ENCODE measurements at regions of chr7 and their contacts with region 1.

Region 1: GRCh38 chr7:45052011-45052410 is 36.8 kb downstream of the NACAD start:
- DNase-seq: no peak
- ATAC-seq: no peak
- H3K4me3 ChIP-seq: no peak overlapping the region
- H3K27ac ChIP-seq: no peak overlapping the region
- H3K4me1 ChIP-seq: no peaks in the 10 kb centered on the region
- H3K27me3 ChIP-seq: no peaks in the 10 kb centered on the region
- CTCF ChIP-seq: no peak

Region 2: GRCh38 chr7:44654255-44654796 is 397.7 kb before region 1 on chr7:
- CTCF ChIA-PET with region 1: no interaction called
- POLR2A ChIA-PET with region 1: no interaction called
- in situ Hi-C with region 1: no loop called
- intact Hi-C with region 1: no loop called
- DNase-seq: no peak
- ATAC-seq: no peak
- H3K4me3 ChIP-seq: no peak overlapping the region
- H3K27ac ChIP-seq: no peak overlapping the region
- H3K4me1 ChIP-seq: no peaks in the 10 kb centered on the region
- H3K27me3 ChIP-seq: no peaks in the 10 kb centered on the region
- CTCF ChIP-seq: no peak

Region 3: GRCh38 chr7:44784364-44784763 is 267.6 kb before region 1 on chr7:
- CTCF ChIA-PET with region 1: no interaction called
- POLR2A ChIA-PET with region 1: no interaction called
- in situ Hi-C with region 1: no loop called
- intact Hi-C with region 1: no loop called
- DNase-seq: no peak
- ATAC-seq: peak; percentile 30
- H3K4me3 ChIP-seq: no peak overlapping the region
- H3K27ac ChIP-seq: no peak overlapping the region
- H3K4me1 ChIP-seq: no peaks in the 10 kb centered on the region
- H3K27me3 ChIP-seq: no peaks in the 10 kb centered on the region
- CTCF ChIP-seq: no peak

Region 4: DNA sequence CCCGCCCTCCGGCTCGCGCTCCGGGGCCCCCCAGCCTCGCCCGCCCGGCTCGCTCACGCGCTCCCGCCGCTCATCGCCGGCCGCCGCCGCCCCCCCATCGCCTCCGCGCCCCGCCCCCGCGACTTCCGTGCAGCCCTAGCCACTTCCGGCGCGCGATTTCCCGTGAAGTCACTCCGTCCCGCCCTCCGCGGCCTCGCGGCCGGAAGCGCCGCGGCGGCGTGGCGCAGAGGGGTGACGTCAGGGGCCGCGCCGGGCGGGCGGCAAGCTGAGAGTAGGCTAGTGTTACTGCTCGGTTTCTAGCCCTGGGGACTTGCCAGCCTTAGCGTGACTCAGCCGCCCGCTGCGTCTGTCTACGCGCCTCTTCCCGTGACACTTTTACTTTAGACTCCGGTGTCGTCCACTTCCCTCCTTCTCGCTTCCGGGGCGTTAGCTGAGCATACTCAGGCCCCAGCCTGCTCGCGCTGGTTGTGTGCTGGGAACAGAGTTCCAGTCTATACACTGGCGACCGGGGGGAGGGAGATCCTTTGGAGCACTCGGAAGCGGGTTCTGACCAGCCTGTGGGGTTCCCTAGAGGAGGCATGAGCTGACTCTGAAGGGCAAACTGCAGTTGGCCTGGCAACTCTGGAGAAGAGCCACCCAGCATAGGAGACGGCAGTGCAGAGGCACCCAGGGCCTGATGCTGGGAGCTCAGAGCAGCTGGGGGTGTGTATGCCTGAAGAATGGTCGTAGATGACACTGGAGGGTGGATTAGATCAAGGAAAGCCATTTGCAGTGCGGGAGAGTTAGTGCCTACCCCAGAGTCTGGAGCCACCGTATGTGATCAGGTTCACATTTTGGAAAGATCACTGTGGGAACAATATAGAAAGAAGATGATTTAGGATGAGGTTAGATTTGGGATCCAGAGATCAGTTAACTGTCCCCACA is 166.4 kb before region 1 on chr7 and contains the start of gene PURB:
- CTCF ChIA-PET with region 1: no interaction called
- POLR2A ChIA-PET with region 1: no interaction called
- in situ Hi-C with region 1: no loop called
- intact Hi-C with region 1: no loop called
- DNase-seq: peak; percentile 95
- ATAC-seq: peak; percentile 97
- H3K4me3 ChIP-seq: peak within 1 kb of the TSS; percentile 81 to 83
- H3K27ac ChIP-seq: peak within 1 kb of the TSS; percentile 98
- H3K4me1 ChIP-seq: peaks cover 37% of the 10 kb centered on the region
- H3K27me3 ChIP-seq: no peaks in the 10 kb centered on the region
- CTCF ChIP-seq: no peak
- total RNA-seq, gene PURB: 25.2 TPM

Region 5: DNA sequence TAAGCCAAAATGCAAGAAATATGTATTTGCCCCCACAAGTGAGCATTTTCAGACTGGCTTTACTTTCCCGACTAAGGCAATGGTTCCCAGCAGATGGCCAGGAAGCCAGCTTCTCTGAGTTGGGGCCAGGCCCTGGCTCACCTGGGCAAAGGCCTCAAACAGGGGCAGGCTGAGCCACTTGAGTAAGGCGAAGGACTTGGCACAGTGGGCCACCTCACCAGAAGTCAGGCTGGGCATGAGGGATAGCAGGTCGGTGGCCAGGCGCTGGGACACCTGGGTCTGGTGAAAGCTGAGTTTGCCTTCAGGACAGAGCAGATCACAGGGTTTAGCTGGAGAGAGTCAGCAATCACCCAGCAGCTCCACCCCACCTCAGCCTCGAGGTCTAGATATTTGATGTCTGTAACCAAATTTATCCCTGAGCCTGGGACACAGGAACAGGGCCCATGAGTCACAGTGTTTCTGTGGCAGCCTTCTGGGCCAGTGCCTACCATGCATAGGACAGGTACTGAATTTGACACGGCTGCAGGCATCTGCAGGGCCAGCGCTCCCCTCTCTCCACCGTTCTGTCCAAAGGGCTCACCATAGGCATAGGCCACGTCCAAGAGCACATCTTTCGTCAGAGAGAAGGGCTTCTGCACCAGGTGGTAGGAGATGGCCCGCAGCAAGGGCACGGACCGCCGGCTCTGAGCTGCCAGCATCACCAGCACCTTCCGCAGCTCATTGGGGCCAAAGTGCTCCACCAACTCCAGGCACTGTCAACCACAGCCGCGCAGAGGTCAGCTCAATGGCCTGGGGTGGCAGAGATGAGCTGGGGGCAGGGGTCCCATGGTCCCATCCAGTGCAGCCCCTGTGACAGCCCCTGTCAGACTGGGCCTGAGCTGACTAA is 52.2 kb after region 1 on chr7:
- CTCF ChIA-PET with region 1: no interaction called
- POLR2A ChIA-PET with region 1: no interaction called
- in situ Hi-C with region 1: no loop called
- intact Hi-C with region 1: no loop called
- DNase-seq: no peak
- ATAC-seq: no peak
- H3K4me3 ChIP-seq: no peak overlapping the region
- H3K27ac ChIP-seq: no peak overlapping the region
- H3K4me1 ChIP-seq: peaks cover 19% of the 10 kb centered on the region
- H3K27me3 ChIP-seq: no peaks in the 10 kb centered on the region
- CTCF ChIP-seq: no peak

Region 6: DNA sequence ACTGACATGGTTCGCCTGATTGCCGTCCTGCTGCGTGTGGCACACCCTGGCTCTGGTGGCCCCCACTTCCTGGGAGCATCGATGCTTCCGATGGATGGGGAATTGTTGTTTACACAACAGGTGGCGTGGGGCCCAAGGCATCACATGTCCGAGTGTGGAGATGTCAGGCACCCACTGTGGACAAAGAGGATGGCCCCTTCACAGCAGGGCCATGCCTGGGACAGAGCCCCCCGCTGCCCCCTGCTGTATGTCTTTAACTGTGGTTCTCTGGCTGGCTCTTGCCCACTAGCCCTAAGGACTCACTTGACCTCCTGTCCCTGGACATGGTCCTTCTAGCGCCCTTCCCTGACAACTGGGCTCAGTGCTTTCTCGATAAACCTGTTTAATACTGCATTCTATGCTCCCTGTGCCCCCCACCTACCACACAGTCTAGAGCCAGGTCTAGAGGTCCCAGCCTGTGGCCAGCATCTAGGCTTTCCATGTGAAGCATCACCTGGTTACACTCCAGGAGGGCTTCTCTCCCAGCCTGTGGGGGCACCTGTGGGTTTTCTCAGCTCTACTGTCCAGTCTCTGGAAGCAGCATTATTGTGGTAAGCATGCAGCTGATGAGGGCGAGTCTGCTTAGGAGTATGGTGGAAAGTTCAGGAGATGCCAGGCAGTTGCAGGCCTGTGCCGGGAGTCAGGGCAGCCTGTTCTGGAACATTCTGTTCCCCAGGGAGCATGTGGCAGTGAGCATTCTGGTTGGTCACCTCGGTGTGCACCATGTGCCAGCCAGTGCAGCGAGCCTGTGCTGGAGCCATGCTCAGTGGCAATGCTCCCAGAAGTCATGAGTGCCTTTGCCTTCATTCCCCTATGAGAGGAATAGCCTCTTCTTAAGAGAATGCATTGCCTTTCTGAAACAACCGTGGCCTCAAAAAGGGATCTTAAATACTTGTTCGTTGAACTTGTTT is 532.5 kb after region 1 on chr7:
- CTCF ChIA-PET with region 1: no interaction called
- POLR2A ChIA-PET with region 1: interaction called, 16 read pairs
- in situ Hi-C with region 1: no loop called
- intact Hi-C with region 1: no loop called
- DNase-seq: no peak
- ATAC-seq: no peak
- H3K4me3 ChIP-seq: no peak overlapping the region
- H3K27ac ChIP-seq: no peak overlapping the region
- H3K4me1 ChIP-seq: no peaks in the 10 kb centered on the region
- H3K27me3 ChIP-seq: no peaks in the 10 kb centered on the region; the same call in 1 of the 2 replicates
- CTCF ChIP-seq: no peak